ENCODE measurements at regions of chr7 and their contacts with region 1.

Region 1: DNA sequence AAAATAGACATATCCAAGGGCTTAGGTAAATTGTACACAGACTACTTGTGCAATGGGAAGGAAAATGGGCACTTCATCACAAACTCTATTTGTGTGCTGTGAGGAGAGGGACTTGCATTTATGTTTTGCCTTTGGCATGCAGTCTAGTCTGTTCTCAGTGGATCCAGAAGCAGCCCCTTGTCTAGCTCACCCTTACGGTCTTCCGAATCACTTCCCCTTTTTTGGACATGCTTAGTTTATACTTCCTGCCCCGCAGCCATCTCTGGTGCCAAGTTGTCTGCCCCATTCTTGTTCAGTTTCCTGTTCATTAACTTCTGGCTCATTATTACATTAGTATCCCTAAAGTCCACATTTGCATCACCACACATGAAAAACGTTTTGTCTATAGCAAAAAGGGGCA is 161.6 kb downstream of the NRCAM start:
- DNase-seq: peak; percentile 97
- H3K4me3 ChIP-seq: no peak overlapping the region
- H3K27ac ChIP-seq: peak overlapping the region; percentile 86
- H3K4me1 ChIP-seq: peaks cover 86% of the 10 kb centered on the region
- H3K27me3 ChIP-seq: no peaks in the 10 kb centered on the region
- CTCF ChIP-seq: no peak

Region 2: DNA sequence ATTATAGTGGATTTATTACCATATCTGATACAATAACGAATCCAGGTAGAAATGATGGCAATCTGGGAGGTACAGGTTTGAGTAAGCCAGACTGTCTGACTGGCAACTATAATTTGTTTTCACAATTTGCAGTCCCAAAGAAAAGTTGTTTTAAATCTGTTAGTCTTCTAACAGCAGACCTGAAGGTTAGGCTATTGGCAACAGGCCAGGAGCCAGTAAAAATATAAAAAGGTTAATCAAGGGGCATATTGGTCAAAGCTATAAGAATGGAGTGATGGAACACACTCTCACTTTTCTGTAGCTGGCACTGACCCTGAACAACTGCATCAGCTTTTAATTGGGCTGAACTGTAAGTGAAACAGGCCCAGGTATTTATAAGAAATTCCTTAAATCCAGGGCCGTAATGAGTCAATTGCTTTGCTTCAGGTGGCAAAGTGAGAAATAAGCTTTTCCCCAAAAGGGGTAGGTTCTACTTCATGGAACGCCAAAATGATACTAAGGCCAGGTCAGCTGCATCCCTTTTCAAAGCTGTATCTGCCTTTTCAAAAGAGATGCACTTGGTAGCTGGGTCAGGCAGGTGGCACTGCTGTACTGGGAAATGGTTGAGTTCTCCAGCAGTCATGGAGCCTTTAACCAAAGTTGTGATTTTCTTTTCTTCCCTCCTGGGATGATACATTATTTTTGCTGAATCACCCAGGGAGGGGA is 831.7 kb before region 1 on chr7:
- CTCF ChIA-PET with region 1: no interaction called
- POLR2A ChIA-PET with region 1: no interaction called
- intact Hi-C with region 1: no loop called
- DNase-seq: peak; percentile 71
- H3K4me3 ChIP-seq: no peak overlapping the region
- H3K27ac ChIP-seq: no peak overlapping the region
- H3K4me1 ChIP-seq: no peaks in the 10 kb centered on the region
- H3K27me3 ChIP-seq: no peaks in the 10 kb centered on the region
- CTCF ChIP-seq: peak; percentile 74

Region 3: GRCh38 chr7:108419961-108420908 is 125.6 kb after region 1 on chr7:
- CTCF ChIA-PET with region 1: no interaction called
- POLR2A ChIA-PET with region 1: no interaction called
- intact Hi-C with region 1: loop called (anchors 2 kb)
- DNase-seq: peak; percentile 98
- H3K4me3 ChIP-seq: peak overlapping the region; percentile 12
- H3K27ac ChIP-seq: peak overlapping the region; percentile 94
- H3K4me1 ChIP-seq: peaks cover 77% of the 10 kb centered on the region
- H3K27me3 ChIP-seq: no peaks in the 10 kb centered on the region
- CTCF ChIP-seq: no peak

Region 4: DNA sequence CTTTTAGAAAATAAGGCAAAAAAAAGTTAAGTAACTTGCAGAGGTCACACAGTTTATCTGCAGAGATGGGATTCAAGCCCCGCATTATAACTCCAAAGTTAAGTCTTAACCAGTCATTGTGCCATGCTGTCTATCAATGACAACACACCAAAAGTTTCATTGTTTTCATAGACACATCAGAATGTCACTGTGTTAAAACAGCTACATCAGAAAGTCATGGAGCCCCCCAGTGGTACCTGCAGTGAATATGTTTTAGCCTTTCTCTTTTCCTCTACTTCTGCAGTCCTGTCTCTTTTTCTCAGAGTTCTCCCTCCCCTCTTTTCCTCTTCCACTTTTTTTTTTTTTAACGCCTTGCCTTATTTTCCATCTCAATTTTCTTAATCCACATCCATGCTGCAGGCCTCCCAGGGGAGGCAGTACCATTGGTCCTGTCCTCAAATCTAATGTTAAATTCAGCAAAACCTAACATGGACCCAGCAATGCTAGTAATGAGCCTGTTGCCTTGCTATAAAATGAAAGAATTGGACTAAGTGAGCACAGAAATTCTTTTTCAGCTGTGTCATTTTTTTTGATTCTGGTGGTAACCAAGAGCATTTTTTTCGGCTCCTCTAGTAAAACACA is 165.4 kb after region 1 on chr7:
- CTCF ChIA-PET with region 1: no interaction called
- POLR2A ChIA-PET with region 1: no interaction called
- intact Hi-C with region 1: loop called (anchors 2 kb)
- DNase-seq: peak; percentile 80
- H3K4me3 ChIP-seq: no peak overlapping the region
- H3K27ac ChIP-seq: no peak overlapping the region
- H3K4me1 ChIP-seq: peaks cover 7% of the 10 kb centered on the region
- H3K27me3 ChIP-seq: no peaks in the 10 kb centered on the region
- CTCF ChIP-seq: peak; percentile 80